Activated CD4-positive, alpha-beta memory T cell treated with anti-CD3 and anti-CD28 coated beads for 36 hours (primary cell): ENCODE measurements at regions of chr6 and their contacts with region 1.

Region 1: GRCh38 chr6:73653571-73654424 is at the start of gene SLC17A5:
- DNase-seq: peak; percentile 94
- H3K4me3 Mint-ChIP-seq: peak within 1 kb of the TSS; percentile 97
- H3K27ac Mint-ChIP-seq: peak within 1 kb of the TSS; percentile 95
- H3K4me1 Mint-ChIP-seq: peaks cover 23% of the 10 kb centered on the region
- H3K27me3 Mint-ChIP-seq: no peaks in the 10 kb centered on the region
- total RNA-seq, gene SLC17A5: 5.1 to 5.4 TPM

Region 2: GRCh38 chr6:73388800-73389512 is 264.8 kb before region 1 on chr6:
- CTCF ChIA-PET with region 1: interaction called, 5 read pairs
- POLR2A ChIA-PET with region 1: no interaction called
- intact Hi-C with region 1: loop called (anchors 2 kb)
- DNase-seq: peak; percentile 78
- H3K4me3 Mint-ChIP-seq: peak overlapping the region; percentile 83
- H3K27ac Mint-ChIP-seq: peak overlapping the region; percentile 69
- H3K4me1 Mint-ChIP-seq: peaks cover 17% of the 10 kb centered on the region
- H3K27me3 Mint-ChIP-seq: no peaks in the 10 kb centered on the region

Region 3: DNA sequence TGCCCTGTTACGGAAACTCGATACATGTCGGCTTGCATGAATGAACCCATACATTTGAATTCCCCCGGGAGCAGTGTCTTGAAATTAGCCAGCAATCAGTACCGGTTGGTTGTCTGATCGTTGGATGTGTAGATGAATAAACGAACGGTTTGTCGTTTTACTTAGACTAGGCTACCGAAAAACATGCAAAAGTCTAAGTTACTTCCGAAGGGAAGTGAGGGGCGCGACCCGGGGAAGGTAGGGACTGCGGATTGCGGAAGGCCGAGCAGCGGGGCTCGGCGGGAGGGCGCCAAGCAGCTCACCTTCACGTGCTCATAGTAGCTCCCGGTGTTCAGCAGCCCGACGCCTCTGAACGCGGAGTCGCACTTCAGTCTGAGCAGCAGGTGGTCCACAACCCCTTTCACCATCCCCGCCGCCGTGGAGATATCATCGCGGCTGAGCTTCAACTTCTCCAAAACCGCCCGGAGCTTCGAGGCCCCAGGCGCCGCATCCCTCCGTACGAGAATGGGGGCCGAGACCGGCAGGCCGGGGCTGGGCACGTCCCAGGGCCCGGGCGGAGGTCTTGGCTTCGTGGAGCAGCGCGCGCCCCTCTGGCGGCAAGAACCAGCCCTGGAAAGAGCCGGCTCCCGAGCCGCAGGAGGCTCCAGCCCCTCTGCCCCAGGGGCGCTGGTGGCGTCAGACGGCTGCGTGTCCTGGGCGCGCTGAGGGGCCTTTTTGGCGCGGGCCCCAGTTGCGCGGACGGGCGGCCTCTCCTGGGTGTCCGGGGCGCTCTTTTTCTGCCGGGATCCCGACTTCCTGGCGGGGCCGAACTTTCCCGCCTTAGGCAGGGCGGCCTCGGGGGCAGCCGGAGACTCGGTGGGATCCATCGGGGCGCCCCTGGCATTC is 202.3 kb before region 1 on chr6:
- CTCF ChIA-PET with region 1: interaction called, 10 read pairs
- POLR2A ChIA-PET with region 1: interaction called, 4 read pairs
- intact Hi-C with region 1: loop called (anchors 1 kb)
- DNase-seq: peak; percentile 61
- H3K4me3 Mint-ChIP-seq: peak overlapping the region; percentile 86
- H3K27ac Mint-ChIP-seq: peak overlapping the region; percentile 93
- H3K4me1 Mint-ChIP-seq: peaks cover 18% of the 10 kb centered on the region
- H3K27me3 Mint-ChIP-seq: no peaks in the 10 kb centered on the region

Region 4: DNA sequence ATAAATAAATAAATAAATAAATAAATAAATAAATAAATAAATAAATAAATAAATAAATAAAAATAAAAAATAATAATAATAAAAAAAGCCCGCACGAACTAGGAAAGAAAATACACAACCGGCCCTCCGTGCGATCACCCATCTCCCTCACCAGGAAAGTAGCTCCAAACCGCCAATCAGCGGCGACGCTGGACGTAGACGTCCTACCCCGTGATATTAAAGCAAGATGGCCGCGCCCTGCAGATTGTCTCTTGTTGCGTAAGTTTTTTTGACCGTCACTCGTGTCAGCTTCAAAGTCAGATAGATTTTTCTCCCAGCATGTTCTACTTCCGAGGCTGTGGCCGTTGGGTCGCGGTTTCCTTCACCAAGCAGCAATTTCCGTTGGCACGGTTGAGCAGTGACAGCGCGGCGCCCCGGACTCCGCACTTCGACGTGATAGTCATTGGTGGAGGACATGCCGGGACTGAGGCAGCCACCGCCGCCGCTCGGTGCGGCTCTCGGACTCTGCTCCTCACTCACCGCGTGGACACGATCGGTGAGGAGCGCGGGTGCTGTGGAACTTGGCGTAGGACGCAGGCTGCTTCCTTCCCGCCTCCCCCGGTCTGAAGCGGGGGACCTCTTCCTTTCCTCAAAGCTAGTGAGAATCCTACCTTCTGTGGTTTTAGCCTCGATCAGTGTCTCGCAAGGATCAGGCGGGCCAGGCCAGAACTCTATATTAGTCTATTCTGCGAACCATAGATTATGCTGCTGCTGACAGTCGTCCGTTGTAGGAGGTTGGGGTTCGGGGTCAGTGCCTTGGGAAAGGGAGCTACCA is 192.1 kb before region 1 on chr6 and contains the start of gene MTO1:
- CTCF ChIA-PET with region 1: interaction called, 11 read pairs
- POLR2A ChIA-PET with region 1: interaction called, 8 read pairs
- intact Hi-C with region 1: no loop called
- DNase-seq: peak; percentile 91
- H3K4me3 Mint-ChIP-seq: peak within 1 kb of the TSS; percentile 97
- H3K27ac Mint-ChIP-seq: peak within 1 kb of the TSS; percentile 97
- H3K4me1 Mint-ChIP-seq: peaks cover 40% of the 10 kb centered on the region
- H3K27me3 Mint-ChIP-seq: no peaks in the 10 kb centered on the region
- total RNA-seq, gene MTO1: 40.7 to 47.7 TPM

Region 5: GRCh38 chr6:73695619-73696421 is 42.0 kb after region 1 on chr6 and contains the start of gene CD109:
- CTCF ChIA-PET with region 1: interaction called, 4 read pairs
- POLR2A ChIA-PET with region 1: no interaction called
- intact Hi-C with region 1: loop called (anchors 1 kb)
- DNase-seq: peak; percentile 87
- H3K4me3 Mint-ChIP-seq: peak within 1 kb of the TSS; percentile 80
- H3K27ac Mint-ChIP-seq: peak within 1 kb of the TSS; percentile 90
- H3K4me1 Mint-ChIP-seq: peaks cover 36% of the 10 kb centered on the region
- H3K27me3 Mint-ChIP-seq: peaks cover 16% of the 10 kb centered on the region
- total RNA-seq, gene CD109: 7.2 to 9.1 TPM

Region 6: DNA sequence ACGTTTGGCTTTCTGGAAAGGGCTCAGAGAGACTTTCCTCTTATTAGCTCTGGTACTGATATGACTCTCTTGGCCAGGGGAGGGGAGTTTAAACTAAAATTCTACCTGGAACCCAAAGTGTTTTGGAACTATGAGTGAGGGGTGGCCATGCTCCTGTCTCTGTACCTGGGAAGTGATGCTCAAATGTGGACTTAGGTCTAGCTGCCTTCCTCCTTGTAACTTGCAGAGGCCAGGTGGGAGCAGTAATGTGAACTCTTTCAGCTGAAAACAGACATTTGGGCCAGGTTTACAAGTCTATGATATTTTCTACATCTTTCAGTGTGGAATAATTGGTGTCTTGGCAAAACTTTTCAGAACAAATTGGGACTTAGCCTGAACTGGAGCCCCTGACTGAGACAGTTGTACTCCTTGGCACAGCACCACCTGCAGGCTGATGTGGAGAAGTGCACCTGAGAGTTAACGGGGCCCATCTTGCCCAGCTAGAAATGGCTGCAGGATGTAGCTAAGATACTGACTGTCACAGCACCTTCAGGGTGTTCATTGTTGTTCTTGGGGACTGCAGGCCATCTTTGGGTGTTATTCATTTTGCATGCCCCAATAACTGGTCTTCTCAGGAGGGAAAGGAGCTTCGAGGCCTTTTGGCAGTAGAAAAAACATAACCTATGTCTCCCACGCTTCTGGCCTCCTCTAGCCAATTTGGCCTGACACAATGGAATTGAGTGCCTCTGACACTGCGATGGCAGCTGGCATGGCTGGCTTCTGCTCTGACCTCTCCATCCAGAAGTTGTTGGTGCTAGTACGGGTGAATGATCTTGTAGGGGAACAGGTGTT is 79.3 kb after region 1 on chr6:
- CTCF ChIA-PET with region 1: interaction called, 27 read pairs
- POLR2A ChIA-PET with region 1: no interaction called
- intact Hi-C with region 1: loop called (anchors 2 kb)
- DNase-seq: peak; percentile 81
- H3K4me3 Mint-ChIP-seq: no peak overlapping the region
- H3K27ac Mint-ChIP-seq: no peak overlapping the region
- H3K4me1 Mint-ChIP-seq: peaks cover 10% of the 10 kb centered on the region
- H3K27me3 Mint-ChIP-seq: no peaks in the 10 kb centered on the region